ENCODE measurements at regions of chr12 and their contacts with region 1.

Region 1: DNA sequence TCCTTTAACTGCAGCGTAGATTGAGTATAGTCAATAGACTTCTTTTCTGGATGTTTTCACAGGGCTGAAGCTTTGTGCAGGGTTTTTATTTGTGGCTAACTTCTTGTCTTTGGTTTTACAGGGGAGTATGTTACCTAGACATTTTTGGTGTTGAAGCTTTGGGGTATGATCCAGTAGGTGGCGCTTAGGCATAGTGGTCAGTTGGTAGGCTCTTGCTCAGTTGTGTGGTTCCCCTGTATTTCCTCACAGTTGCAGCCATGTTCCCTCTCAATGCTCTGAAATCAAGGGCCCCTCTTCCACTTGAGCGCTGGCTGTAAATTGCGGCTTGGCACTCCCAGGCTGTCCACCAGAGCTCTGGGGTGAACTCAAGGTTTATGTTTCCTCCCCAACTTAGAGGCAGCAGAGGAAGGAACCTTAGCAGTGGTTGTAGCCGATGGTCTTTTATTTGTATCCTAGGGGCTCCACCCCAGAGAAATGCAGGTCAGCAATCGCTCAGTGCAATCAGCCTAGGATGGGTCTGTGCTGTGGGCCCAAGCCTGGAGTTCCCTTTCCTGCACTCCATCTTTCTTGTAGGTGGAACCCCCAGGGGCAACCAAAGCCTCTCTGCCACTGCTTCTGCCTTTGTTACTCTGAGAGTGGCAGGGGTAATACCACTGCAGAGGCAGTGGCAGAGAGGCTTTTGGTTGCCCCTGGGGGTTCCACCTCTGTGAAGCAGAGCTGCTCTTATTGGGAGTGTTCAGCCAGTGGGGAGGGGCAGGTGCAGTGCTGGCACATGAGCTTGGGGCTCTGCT is 55.1 kb downstream of the CMAS start:
- DNase-seq: peak; percentile 82
- H3K4me3 Mint-ChIP-seq: no peak overlapping the region
- H3K27ac Mint-ChIP-seq: peak overlapping the region; percentile 81
- H3K4me1 Mint-ChIP-seq: peaks cover 19% of the 10 kb centered on the region
- H3K27me3 Mint-ChIP-seq: no peaks in the 10 kb centered on the region
- CTCF ChIP-seq: peak; percentile 58

Region 2: GRCh38 chr12:21580748-21581516 is 520.2 kb before region 1 on chr12:
- CTCF ChIA-PET with region 1: no interaction called
- POLR2A ChIA-PET with region 1: no interaction called
- intact Hi-C with region 1: no loop called
- DNase-seq: no peak
- H3K4me3 Mint-ChIP-seq: no peak overlapping the region
- H3K27ac Mint-ChIP-seq: no peak overlapping the region
- H3K4me1 Mint-ChIP-seq: no peaks in the 10 kb centered on the region
- H3K27me3 Mint-ChIP-seq: no peaks in the 10 kb centered on the region
- CTCF ChIP-seq: no peak

Region 3: DNA sequence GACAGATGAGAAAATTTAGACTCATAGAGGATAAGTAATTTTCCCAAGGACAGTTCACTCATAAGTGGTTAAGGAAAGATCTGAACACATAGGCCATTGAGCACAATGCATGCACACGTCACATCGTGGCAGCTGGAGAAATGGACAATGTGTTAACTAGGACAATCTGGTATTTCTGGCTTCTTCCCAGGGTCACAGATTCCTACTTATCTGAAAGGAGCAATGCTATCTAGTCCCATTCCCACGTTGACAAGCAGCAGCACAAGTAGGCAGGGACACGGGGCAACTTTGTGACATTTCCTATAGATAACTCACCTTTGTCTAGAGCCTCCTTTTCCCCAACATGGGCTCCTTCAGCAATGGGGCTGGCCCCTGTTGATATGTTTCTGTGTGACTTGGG is 61.8 kb before region 1 on chr12:
- CTCF ChIA-PET with region 1: no interaction called
- POLR2A ChIA-PET with region 1: no interaction called
- intact Hi-C with region 1: no loop called
- DNase-seq: no peak
- H3K4me3 Mint-ChIP-seq: no peak overlapping the region
- H3K27ac Mint-ChIP-seq: no peak overlapping the region
- H3K4me1 Mint-ChIP-seq: peaks cover 49% of the 10 kb centered on the region
- H3K27me3 Mint-ChIP-seq: no peaks in the 10 kb centered on the region
- CTCF ChIP-seq: no peak

Region 4: GRCh38 chr12:22054155-22054554 is 47.0 kb before region 1 on chr12:
- CTCF ChIA-PET with region 1: no interaction called
- POLR2A ChIA-PET with region 1: no interaction called
- intact Hi-C with region 1: no loop called
- DNase-seq: no peak
- H3K4me3 Mint-ChIP-seq: no peak overlapping the region
- H3K27ac Mint-ChIP-seq: no peak overlapping the region
- H3K4me1 Mint-ChIP-seq: no peaks in the 10 kb centered on the region
- H3K27me3 Mint-ChIP-seq: no peaks in the 10 kb centered on the region
- CTCF ChIP-seq: no peak

Region 5: GRCh38 chr12:22069856-22070565 is 31.1 kb before region 1 on chr12:
- CTCF ChIA-PET with region 1: no interaction called
- POLR2A ChIA-PET with region 1: no interaction called
- intact Hi-C with region 1: no loop called
- DNase-seq: no peak
- H3K4me3 Mint-ChIP-seq: no peak overlapping the region
- H3K27ac Mint-ChIP-seq: no peak overlapping the region
- H3K4me1 Mint-ChIP-seq: no peaks in the 10 kb centered on the region
- H3K27me3 Mint-ChIP-seq: no peaks in the 10 kb centered on the region
- CTCF ChIP-seq: no peak

Region 6: GRCh38 chr12:22083167-22083566 is 18.0 kb before region 1 on chr12:
- CTCF ChIA-PET with region 1: interaction called, 28 read pairs
- POLR2A ChIA-PET with region 1: interaction called, 3 read pairs
- intact Hi-C with region 1: no loop called
- DNase-seq: peak; percentile 47
- H3K4me3 Mint-ChIP-seq: no peak overlapping the region
- H3K27ac Mint-ChIP-seq: no peak overlapping the region
- H3K4me1 Mint-ChIP-seq: no peaks in the 10 kb centered on the region
- H3K27me3 Mint-ChIP-seq: no peaks in the 10 kb centered on the region
- CTCF ChIP-seq: peak; percentile 58

Region 7: GRCh38 chr12:22173177-22173576 is 72.0 kb after region 1 on chr12:
- CTCF ChIA-PET with region 1: no interaction called
- POLR2A ChIA-PET with region 1: interaction called, 3 read pairs
- intact Hi-C with region 1: loop called (anchors 2 kb)
- DNase-seq: peak; percentile 2
- H3K4me3 Mint-ChIP-seq: no peak overlapping the region
- H3K27ac Mint-ChIP-seq: no peak overlapping the region
- H3K4me1 Mint-ChIP-seq: no peaks in the 10 kb centered on the region
- H3K27me3 Mint-ChIP-seq: no peaks in the 10 kb centered on the region
- CTCF ChIP-seq: no peak

Region 8: DNA sequence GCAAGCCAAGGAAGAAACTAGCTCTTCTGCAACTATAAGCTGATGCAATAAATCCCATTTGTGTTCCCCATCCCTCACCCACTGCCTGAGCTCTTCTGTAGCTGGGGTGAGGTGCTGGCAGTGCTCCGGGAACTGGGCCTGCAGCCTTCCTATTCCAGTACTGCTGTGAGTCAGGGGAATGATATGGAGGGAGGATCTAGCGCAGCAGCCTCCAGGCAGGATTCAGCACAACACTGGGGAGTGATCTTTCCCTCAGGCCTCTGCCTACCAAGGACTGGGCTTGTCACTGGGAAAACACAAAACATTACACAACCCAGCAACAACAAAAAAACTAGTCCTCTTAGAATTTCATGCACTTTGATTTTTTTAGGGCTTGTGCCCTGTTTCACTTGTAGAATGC is 174.7 kb after region 1 on chr12:
- CTCF ChIA-PET with region 1: interaction called, 5 read pairs
- POLR2A ChIA-PET with region 1: interaction called, 16 read pairs
- intact Hi-C with region 1: loop called (anchors 2 kb)
- DNase-seq: peak; percentile 99
- H3K4me3 Mint-ChIP-seq: peak overlapping the region; percentile 53
- H3K27ac Mint-ChIP-seq: peak overlapping the region; percentile 96
- H3K4me1 Mint-ChIP-seq: peaks cover 51% of the 10 kb centered on the region
- H3K27me3 Mint-ChIP-seq: no peaks in the 10 kb centered on the region
- CTCF ChIP-seq: no peak

Region 9: GRCh38 chr12:22340143-22340542 is 239.0 kb after region 1 on chr12:
- CTCF ChIA-PET with region 1: interaction called, 62 read pairs
- POLR2A ChIA-PET with region 1: interaction called, 7 read pairs
- intact Hi-C with region 1: loop called (anchors 1 kb)
- DNase-seq: no peak
- H3K4me3 Mint-ChIP-seq: no peak overlapping the region
- H3K27ac Mint-ChIP-seq: no peak overlapping the region
- H3K4me1 Mint-ChIP-seq: no peaks in the 10 kb centered on the region
- H3K27me3 Mint-ChIP-seq: no peaks in the 10 kb centered on the region
- CTCF ChIP-seq: no peak